Activated CD8-positive, alpha-beta memory T cell treated with anti-CD3 and anti-CD28 coated beads, Interleukin-2, amount 10 ng/mL, durations not matched to agents 7 days and 5 days (primary cell): ENCODE measurements at regions of chrX and their contacts with region 1.

Region 1: GRCh38 chrX:154980330-154981096 is 42.0 kb downstream of the F8 start:
- DNase-seq: peak; percentile 86
- ATAC-seq: peak; percentile 98
- H3K4me3 Mint-ChIP-seq: peak overlapping the region; percentile 78
- H3K27ac Mint-ChIP-seq: peak overlapping the region; percentile 85
- H3K4me1 Mint-ChIP-seq: peaks cover 25% of the 10 kb centered on the region
- H3K27me3 Mint-ChIP-seq: no peaks in the 10 kb centered on the region

Region 2: GRCh38 chrX:154892296-154892695 is 88.2 kb before region 1 on chrX:
- CTCF ChIA-PET with region 1: no interaction called
- DNase-seq: no peak
- ATAC-seq: no peak
- H3K4me3 Mint-ChIP-seq: no peak overlapping the region
- H3K27ac Mint-ChIP-seq: no peak overlapping the region
- H3K4me1 Mint-ChIP-seq: peaks cover 9% of the 10 kb centered on the region
- H3K27me3 Mint-ChIP-seq: no peaks in the 10 kb centered on the region

Region 3: DNA sequence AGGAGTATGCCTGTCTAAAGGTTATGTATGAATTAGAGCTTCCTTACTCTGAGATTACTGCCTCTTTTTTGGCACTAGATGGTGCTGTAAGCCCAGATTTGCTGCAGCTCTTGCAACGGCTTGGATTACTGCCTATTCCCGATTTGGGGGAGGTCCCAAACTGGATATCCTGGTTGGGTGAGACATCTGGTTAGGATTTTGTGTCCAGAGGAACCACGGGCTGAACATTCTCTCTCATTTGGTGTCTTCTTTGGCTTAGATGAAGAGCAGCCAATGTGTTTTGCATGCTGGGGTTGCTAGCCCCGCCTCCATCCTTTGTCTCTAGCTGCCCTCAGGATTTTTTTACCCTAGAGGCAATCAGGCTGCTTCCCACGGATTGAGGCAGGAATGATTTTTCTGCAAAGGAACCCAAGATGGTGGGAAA is 62.4 kb before region 1 on chrX:
- CTCF ChIA-PET with region 1: interaction called, 24 read pairs
- DNase-seq: peak; percentile 41
- ATAC-seq: peak; percentile 55
- H3K4me3 Mint-ChIP-seq: peak overlapping the region; percentile 46
- H3K27ac Mint-ChIP-seq: no peak overlapping the region
- H3K4me1 Mint-ChIP-seq: no peaks in the 10 kb centered on the region
- H3K27me3 Mint-ChIP-seq: peaks cover 7% of the 10 kb centered on the region

Region 4: GRCh38 chrX:155001873-155002272 is 21.4 kb after region 1 on chrX:
- CTCF ChIA-PET with region 1: no interaction called
- DNase-seq: no peak
- ATAC-seq: no peak
- H3K4me3 Mint-ChIP-seq: no peak overlapping the region
- H3K27ac Mint-ChIP-seq: no peak overlapping the region
- H3K4me1 Mint-ChIP-seq: peaks cover 3% of the 10 kb centered on the region
- H3K27me3 Mint-ChIP-seq: peaks cover 4% of the 10 kb centered on the region

Region 5: GRCh38 chrX:155071694-155072280 is 91.3 kb after region 1 on chrX:
- CTCF ChIA-PET with region 1: no interaction called
- DNase-seq: no peak
- ATAC-seq: no peak
- H3K4me3 Mint-ChIP-seq: peak overlapping the region; percentile 93
- H3K27ac Mint-ChIP-seq: peak overlapping the region; percentile 93
- H3K4me1 Mint-ChIP-seq: peaks cover 58% of the 10 kb centered on the region
- H3K27me3 Mint-ChIP-seq: no peaks in the 10 kb centered on the region

Region 6: GRCh38 chrX:155112171-155112570 is 131.7 kb after region 1 on chrX:
- CTCF ChIA-PET with region 1: no interaction called
- DNase-seq: no peak
- ATAC-seq: no peak
- H3K4me3 Mint-ChIP-seq: no peak overlapping the region
- H3K27ac Mint-ChIP-seq: no peak overlapping the region
- H3K4me1 Mint-ChIP-seq: peaks cover 2% of the 10 kb centered on the region
- H3K27me3 Mint-ChIP-seq: no peaks in the 10 kb centered on the region